ENCODE measurements at regions of chr21 and their contacts with region 1.

Region 1: GRCh38 chr21:31873696-31874599 is 1.1 kb downstream of the HUNK start:
- DNase-seq: peak; percentile 57
- H3K4me3 Mint-ChIP-seq: no peak overlapping the region
- H3K27ac Mint-ChIP-seq: no peak overlapping the region
- H3K4me1 Mint-ChIP-seq: peaks cover 6% of the 10 kb centered on the region
- H3K27me3 Mint-ChIP-seq: peaks cover 40% of the 10 kb centered on the region

Region 2: GRCh38 chr21:31659536-31660258 is 214.3 kb before region 1 on chr21 and contains the start of gene SOD1:
- CTCF ChIA-PET with region 1: no interaction called
- POLR2A ChIA-PET with region 1: no interaction called
- intact Hi-C with region 1: loop called (anchors 10 kb)
- DNase-seq: peak; percentile 96
- H3K4me3 Mint-ChIP-seq: peak within 1 kb of the TSS; percentile 98
- H3K27ac Mint-ChIP-seq: peak within 1 kb of the TSS; percentile 99
- H3K4me1 Mint-ChIP-seq: peaks cover 65% of the 10 kb centered on the region
- H3K27me3 Mint-ChIP-seq: no peaks in the 10 kb centered on the region
- total RNA-seq, gene SOD1: 280 to 286 TPM

Region 3: GRCh38 chr21:31888936-31889371 is 15.0 kb after region 1 on chr21:
- CTCF ChIA-PET with region 1: no interaction called
- POLR2A ChIA-PET with region 1: no interaction called
- intact Hi-C with region 1: no loop called
- DNase-seq: no peak
- H3K4me3 Mint-ChIP-seq: no peak overlapping the region
- H3K27ac Mint-ChIP-seq: no peak overlapping the region
- H3K4me1 Mint-ChIP-seq: no peaks in the 10 kb centered on the region
- H3K27me3 Mint-ChIP-seq: peaks cover 2% of the 10 kb centered on the region

Measured in activated CD4-positive, alpha-beta memory T cell treated with anti-CD3 and anti-CD28 coated beads for 36 hours (primary cell).